Activated T-helper 2 cell treated with anti-CD3 and anti-CD28 coated beads, Interferon-gamma antibody, Interleukin-2, Interleukin-4, amounts not matched to agents 10 μg/mL and 5 μg/mL and 100 μg/mL, durations not matched to agents 14 hours and 24 hours and 36 hours (primary cell): ENCODE measurements at regions of chr6 and their contacts with region 1.

Region 1: GRCh38 chr6:138817822-138818308 is 22.0 kb downstream of the ECT2L start:
- DNase-seq: no peak
- H3K4me3 Mint-ChIP-seq: peak overlapping the region; percentile 61
- H3K27ac Mint-ChIP-seq: peak overlapping the region; percentile 94
- H3K4me1 Mint-ChIP-seq: peaks cover 41% of the 10 kb centered on the region
- H3K27me3 Mint-ChIP-seq: no peaks in the 10 kb centered on the region

Region 2: DNA sequence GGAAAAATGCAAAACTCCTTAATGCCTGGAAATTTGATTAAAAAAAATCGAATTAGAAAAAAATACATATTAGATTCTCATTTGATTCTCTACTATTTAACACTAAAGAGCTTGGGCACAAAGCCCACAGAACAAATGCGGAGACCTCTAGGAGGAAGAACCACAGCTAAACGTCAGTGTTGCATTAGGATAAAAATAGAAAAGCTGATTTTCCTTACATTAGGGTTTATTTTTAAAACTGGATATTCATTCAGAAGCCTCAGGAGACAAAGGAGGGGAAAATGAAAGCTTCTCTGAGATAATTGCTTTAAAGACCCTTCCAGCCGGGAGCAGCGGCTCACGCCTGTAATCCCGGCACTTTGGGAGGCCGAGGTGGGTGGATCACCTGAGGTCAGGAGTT is 55.3 kb after region 1 on chr6:
- intact Hi-C with region 1: loop called (anchors 5 kb)
- DNase-seq: no peak
- H3K4me3 Mint-ChIP-seq: no peak overlapping the region
- H3K27ac Mint-ChIP-seq: no peak overlapping the region
- H3K4me1 Mint-ChIP-seq: peaks cover 6% of the 10 kb centered on the region
- H3K27me3 Mint-ChIP-seq: no peaks in the 10 kb centered on the region

Region 3: DNA sequence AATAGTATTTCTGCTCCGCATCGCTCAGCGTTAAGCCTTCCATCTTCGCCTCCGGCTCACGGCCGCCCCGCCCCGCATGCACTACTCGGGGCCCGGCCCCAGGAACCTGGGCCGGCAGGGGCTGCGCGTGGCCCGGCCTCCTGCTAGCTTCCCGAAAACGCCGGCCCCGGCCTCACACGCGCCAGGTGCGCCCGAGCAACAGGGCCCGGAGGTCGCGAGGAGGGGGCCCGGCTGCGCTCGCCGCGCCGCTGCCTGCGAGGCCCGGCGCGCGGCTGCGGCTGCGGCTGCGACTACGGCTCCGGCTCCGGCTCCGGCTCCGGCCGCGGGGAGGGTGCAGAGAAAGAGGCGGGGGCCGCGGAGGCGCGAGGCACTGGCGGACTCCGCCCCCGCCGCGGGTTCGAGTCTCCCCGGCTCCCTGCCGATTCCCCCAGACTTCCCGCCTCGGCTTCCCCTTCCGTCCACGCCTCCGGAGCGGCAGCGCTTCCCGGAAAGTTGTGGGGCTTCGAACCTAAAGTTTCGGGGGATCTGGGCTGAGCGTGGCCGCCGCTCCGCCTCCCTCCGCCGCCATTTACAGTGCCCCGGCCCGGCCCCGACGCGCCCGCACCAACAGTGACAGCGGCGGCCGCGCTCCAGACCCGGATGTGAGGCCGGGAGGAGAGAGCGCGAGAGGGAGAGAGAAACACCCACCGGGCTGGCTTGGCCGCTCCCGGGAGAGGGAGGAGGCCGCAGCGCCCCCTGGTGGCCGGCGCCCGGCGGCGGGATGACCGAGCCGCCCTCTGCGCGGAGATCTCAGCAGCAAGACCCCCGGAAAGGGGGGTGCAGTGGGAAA is 170.0 kb after region 1 on chr6 and contains the start of gene REPS1:
- intact Hi-C with region 1: loop called (anchors 1 kb)
- DNase-seq: peak; percentile 86
- H3K4me3 Mint-ChIP-seq: peak within 1 kb of the TSS; percentile 92
- H3K27ac Mint-ChIP-seq: peak within 1 kb of the TSS; percentile 95
- H3K4me1 Mint-ChIP-seq: peaks cover 6% of the 10 kb centered on the region
- H3K27me3 Mint-ChIP-seq: peaks cover 2% of the 10 kb centered on the region
- total RNA-seq, gene REPS1: 96.3 and 99.8 TPM in 2 replicates

Region 4: GRCh38 chr6:139124887-139125672 is 307.2 kb after region 1 on chr6:
- intact Hi-C with region 1: loop called (anchors 2 kb)
- DNase-seq: peak; percentile 76
- H3K4me3 Mint-ChIP-seq: peak overlapping the region; percentile 43
- H3K27ac Mint-ChIP-seq: peak overlapping the region; percentile 95
- H3K4me1 Mint-ChIP-seq: peaks cover 38% of the 10 kb centered on the region
- H3K27me3 Mint-ChIP-seq: no peaks in the 10 kb centered on the region

Region 5: GRCh38 chr6:139219271-139219729 is 401.4 kb after region 1 on chr6:
- intact Hi-C with region 1: loop called (anchors 1 kb)
- DNase-seq: peak; percentile 55
- H3K4me3 Mint-ChIP-seq: no peak overlapping the region
- H3K27ac Mint-ChIP-seq: no peak overlapping the region
- H3K4me1 Mint-ChIP-seq: peaks cover 9% of the 10 kb centered on the region
- H3K27me3 Mint-ChIP-seq: peaks cover 3% of the 10 kb centered on the region

Region 6: GRCh38 chr6:139375232-139376016 is 557.6 kb after region 1 on chr6:
- intact Hi-C with region 1: loop called (anchors 2 kb)
- DNase-seq: peak; percentile 83
- H3K4me3 Mint-ChIP-seq: peak overlapping the region; percentile 92
- H3K27ac Mint-ChIP-seq: peak overlapping the region; percentile 98
- H3K4me1 Mint-ChIP-seq: peaks cover 40% of the 10 kb centered on the region
- H3K27me3 Mint-ChIP-seq: no peaks in the 10 kb centered on the region

Region 7: GRCh38 chr6:139422105-139423036 is 604.5 kb after region 1 on chr6:
- intact Hi-C with region 1: no loop called
- DNase-seq: no peak
- H3K4me3 Mint-ChIP-seq: no peak overlapping the region
- H3K27ac Mint-ChIP-seq: no peak overlapping the region
- H3K4me1 Mint-ChIP-seq: no peaks in the 10 kb centered on the region
- H3K27me3 Mint-ChIP-seq: peaks cover 41% of the 10 kb centered on the region